ENCODE measurements at regions of chr10 and their contacts with region 1.

Region 1: DNA sequence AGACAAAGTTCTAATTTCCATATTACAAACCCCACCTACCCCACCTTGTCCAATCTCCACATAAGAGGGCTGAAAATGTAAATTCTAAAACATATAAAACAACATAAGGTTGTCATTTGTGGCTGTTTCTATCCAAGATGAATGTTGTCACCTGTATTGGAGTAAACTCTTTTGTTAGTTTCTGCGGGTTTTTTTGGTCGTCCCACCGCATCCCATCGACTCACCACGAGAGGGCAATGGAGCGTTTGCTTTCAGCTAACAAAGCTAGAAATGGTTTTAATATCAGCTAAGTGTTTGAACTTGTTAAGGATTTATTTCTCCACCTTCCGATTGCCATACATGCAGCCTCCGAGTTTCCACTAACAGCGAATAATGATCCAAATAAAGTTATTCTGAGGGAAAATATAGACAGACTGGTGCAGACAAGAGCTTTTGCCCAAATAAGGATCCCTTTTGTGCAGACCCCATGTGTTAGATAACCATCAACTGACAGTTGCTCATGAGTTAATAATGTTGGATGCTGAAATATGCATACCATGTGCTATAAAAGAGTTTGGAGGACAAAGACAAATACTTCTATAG is 137.2 kb downstream of the ARID5B start:
- DNase-seq: no peak
- H3K4me3 ChIP-seq: peak overlapping the region in 3 of 4 donors; percentile 14 to 45 (median 19)
- H3K27ac ChIP-seq: peak overlapping the region; percentile 75 to 87 (median 80)
- H3K4me1 ChIP-seq: peaks cover 33 to 89% (median 43%) of the 10 kb centered on the region in 3 donors
- H3K27me3 ChIP-seq: no peaks in the 10 kb centered on the region
- CTCF ChIP-seq: peak; percentile 77 to 90 (median 86)
- POLR2A ChIP-seq: no peak

Region 2: DNA sequence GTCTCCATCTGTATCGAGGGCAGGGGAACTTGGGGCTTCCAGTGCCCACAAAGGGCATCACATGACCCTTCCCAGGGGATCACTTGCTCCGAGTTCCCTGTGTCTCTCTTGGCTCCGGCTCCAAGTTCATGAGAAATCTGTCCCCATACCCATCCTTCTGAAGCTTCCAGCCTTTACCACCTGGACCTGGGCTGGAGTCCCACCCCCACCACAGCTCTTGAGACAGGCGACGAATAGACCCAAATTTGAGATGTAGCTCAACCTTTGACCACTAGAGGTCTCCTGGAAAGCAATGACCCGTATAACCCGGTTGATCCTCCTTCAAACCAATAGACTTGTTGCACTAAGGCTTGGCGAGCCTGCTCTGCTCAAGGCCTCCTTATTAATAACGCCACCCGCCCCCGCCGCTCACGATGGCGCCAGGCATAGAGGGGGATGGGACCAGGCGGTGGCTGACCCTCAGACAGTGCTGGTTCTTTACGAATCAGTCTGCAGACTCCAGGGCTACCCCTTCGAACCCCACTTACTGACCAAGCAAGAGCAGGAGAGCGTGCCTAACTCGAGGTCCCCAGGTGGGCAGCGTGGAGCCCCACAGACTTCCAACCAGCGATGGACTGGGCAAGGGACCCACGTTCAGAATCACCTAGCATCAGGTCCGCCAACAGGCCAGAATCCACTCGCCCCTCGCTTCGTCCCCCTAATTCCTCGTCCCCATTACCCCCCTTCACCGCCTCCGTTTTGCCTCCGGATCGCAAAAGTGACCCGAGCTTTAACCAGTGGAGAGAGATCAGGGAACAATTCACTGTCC is 141.6 kb before region 1 on chr10:
- intact Hi-C with region 1: loop called (anchors 5 kb)
- DNase-seq: no peak
- H3K4me3 ChIP-seq: peak overlapping the region; percentile 21 to 58 (median 44)
- H3K27ac ChIP-seq: peak overlapping the region; percentile 47 to 100 (median 55)
- H3K4me1 ChIP-seq: peaks cover 0 to 42% (median 22%) of the 10 kb centered on the region in 3 donors
- H3K27me3 ChIP-seq: no peaks in the 10 kb centered on the region
- CTCF ChIP-seq: peak; percentile 57 to 79 (median 66)
- POLR2A ChIP-seq: peak in 1 of 4 donors; percentile 56

Region 3: DNA sequence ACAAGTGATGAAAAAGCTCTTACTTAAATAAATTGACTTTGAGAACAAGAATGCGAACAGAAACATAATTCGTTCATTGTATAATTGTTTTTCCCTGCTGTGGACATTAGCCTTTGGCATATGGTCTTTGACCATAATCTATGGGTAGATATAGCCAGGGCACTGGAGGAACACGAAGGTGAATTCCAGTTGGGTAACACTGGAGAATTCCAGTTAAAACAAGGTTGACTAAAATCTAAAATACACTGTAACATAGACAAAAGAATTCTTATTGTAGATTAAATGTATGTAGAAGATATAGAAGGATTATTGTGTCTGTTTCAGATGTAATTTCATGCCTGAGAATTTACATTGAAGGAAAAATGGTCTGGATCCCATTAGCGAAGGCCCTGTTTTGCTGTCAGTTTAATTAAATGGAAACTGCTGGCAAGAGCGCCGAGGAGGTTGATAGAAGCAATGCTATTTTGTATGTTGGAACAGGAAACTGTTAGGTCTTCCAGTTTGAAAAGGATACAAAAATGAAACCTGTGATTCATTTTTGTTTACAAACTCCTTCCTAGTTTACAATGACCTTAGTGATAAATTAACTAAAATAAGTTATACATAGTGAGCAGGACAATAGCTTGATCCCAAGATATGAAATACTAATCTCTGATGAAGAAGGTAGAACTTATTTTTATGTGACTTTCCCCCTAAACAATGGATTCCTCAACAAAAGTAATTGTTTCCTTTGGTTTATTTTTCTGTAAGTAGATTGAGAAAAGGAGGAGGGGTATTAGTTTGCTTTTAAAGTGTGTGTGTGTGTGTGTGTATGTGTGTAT is 68.3 kb before region 1 on chr10:
- intact Hi-C with region 1: no loop called
- DNase-seq: no peak
- H3K4me3 ChIP-seq: no peak overlapping the region
- H3K27ac ChIP-seq: peak overlapping the region in 3 of 4 donors; percentile 31 to 56 (median 45)
- H3K4me1 ChIP-seq: peaks cover 4 to 43% (median 15%) of the 10 kb centered on the region in 3 donors
- H3K27me3 ChIP-seq: no peaks in the 10 kb centered on the region
- CTCF ChIP-seq: no peak
- POLR2A ChIP-seq: no peak